Panc1 (cell line): ENCODE measurements at regions of chr12 and their contacts with region 1.

Region 1: DNA sequence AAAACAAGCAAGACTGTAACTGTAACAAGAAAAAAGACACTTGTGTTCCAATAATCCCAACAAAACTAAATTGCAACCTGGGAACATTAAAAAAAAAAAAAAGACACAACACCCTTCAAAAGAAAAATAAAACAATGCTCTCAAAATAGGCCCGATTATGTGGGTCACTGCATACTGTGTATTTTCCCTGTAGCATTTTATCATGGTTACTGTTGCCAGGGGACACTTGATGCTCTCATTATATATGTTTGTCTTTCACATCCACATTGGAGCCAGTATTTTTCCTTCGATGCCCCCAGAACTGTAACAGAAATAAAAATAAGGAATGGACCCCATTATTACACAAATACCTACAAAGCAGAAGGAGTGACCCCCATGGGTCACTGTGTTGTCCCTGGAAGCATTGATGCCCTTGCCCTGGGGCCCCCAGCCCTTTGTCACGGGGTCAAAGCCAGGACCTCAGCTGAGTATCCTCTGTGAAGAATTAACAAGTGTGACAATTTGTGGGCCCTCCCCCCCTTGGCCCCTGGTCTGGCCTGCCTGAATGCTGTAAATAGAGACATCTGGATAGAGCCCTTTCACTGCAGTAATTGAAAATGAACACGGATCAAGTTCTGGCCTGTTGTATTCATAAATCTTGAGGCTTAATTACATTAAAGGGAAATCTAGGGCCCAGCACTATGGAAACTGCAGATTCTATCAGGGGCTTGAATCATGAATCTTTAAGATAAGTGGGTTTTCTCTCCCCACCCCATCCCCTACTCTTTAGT is 72.8 kb downstream of the C12orf42 start:
- DNase-seq: no peak
- ATAC-seq: no peak
- H3K4me3 ChIP-seq: no peak overlapping the region
- H3K27ac ChIP-seq: no peak overlapping the region
- H3K4me1 ChIP-seq: no peaks in the 10 kb centered on the region
- H3K27me3 ChIP-seq: no peaks in the 10 kb centered on the region
- CTCF ChIP-seq: no peak

Region 2: GRCh38 chr12:102950107-102950949 is 472.6 kb before region 1 on chr12:
- CTCF ChIA-PET with region 1: no interaction called
- POLR2A ChIA-PET with region 1: interaction called, 11 read pairs
- in situ Hi-C with region 1: no loop called
- intact Hi-C with region 1: no loop called
- DNase-seq: no peak
- ATAC-seq: peak; percentile 79
- H3K4me3 ChIP-seq: peak overlapping the region in 1 of 2 experiments; percentile 34; a peak in 2 of 4 replicates
- H3K27ac ChIP-seq: no peak overlapping the region
- H3K4me1 ChIP-seq: no peaks in the 10 kb centered on the region; the same call in 1 of the 2 replicates
- H3K27me3 ChIP-seq: peaks cover 5% of the 10 kb centered on the region; the same call in 1 of the 2 replicates
- CTCF ChIP-seq: peak; percentile 42